Caco-2 (cell line): ENCODE measurements at regions of chrX and their contacts with region 1.

Region 1: DNA sequence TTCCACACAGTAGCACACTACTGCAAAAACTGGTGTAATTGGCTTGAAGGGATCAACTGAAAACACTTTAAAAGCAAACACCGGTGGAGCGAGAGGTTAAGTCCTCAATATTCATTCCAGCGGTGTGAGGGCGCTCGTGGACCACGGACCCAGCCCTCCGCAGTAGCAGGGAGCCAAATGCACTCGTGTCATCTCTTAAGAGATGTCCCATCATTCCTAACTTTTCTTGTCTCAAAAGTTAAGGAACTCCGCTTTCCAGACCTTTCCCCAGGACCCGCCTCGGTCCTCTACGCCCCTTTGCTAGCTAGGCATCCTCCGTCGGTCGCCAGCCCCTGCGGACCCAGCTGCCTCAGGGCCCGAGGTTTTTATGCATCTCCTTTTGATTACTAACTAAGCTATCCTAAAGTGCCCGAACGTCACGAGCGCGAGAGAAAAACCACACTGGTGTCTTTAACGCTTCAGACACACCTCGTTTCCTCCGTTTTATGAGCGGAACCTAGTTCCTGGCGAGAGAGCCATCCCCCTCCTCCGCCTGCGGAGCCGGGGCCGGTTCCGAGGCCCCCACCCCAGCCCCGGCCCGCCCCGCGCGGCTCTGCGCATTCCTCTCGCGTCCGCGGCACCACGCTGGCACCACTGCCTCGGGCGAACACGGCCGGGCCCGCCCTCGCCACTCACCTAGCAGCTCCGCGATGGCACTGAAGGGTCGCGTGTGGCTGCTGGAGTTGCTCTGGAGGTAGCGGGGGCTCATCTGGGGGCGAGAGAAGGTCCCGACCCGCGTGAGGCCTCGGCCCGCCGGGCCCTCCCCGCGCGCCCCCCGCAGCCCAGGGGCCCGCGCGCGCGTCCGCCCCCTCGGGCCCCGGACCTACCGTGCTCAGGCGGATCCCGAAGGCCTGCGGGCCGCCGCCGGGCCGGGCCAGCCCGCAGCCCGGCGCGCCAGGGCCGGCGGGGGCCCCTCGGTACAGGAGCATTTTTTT is 723 bp downstream of the MORC4 start:
- DNase-seq: peak; percentile 60 to 65
- H3K4me3 ChIP-seq: peak overlapping the region; percentile 51
- H3K4me3 Mint-ChIP-seq: peak overlapping the region; percentile 91
- H3K27ac Mint-ChIP-seq: no peak overlapping the region
- H3K4me1 ChIP-seq: peaks cover 12% of the 10 kb centered on the region; the same call in 1 of the 2 replicates
- H3K4me1 Mint-ChIP-seq: peaks cover 26% of the 10 kb centered on the region
- H3K27me3 ChIP-seq: no peaks in the 10 kb centered on the region
- H3K27me3 Mint-ChIP-seq: no peaks in the 10 kb centered on the region
- CTCF ChIP-seq: peak in 1 of 2 experiments; percentile 58

Region 2: GRCh38 chrX:106437405-106437804 is 561.9 kb before region 1 on chrX:
- CTCF ChIA-PET with region 1: no interaction called
- POLR2A ChIA-PET with region 1: no interaction called
- intact Hi-C with region 1: no loop called
- DNase-seq: no peak
- H3K4me3 ChIP-seq: no peak overlapping the region
- H3K4me3 Mint-ChIP-seq: no peak overlapping the region
- H3K27ac Mint-ChIP-seq: no peak overlapping the region
- H3K4me1 ChIP-seq: no peaks in the 10 kb centered on the region
- H3K4me1 Mint-ChIP-seq: no peaks in the 10 kb centered on the region
- H3K27me3 ChIP-seq: no peaks in the 10 kb centered on the region
- H3K27me3 Mint-ChIP-seq: peaks cover 8% of the 10 kb centered on the region
- CTCF ChIP-seq: no peak

Region 3: GRCh38 chrX:106698693-106699092 is 300.6 kb before region 1 on chrX:
- CTCF ChIA-PET with region 1: no interaction called
- POLR2A ChIA-PET with region 1: no interaction called
- intact Hi-C with region 1: no loop called
- DNase-seq: no peak
- H3K4me3 ChIP-seq: no peak overlapping the region
- H3K4me3 Mint-ChIP-seq: no peak overlapping the region
- H3K27ac Mint-ChIP-seq: no peak overlapping the region
- H3K4me1 ChIP-seq: no peaks in the 10 kb centered on the region
- H3K4me1 Mint-ChIP-seq: peaks cover 38% of the 10 kb centered on the region
- H3K27me3 ChIP-seq: no peaks in the 10 kb centered on the region
- H3K27me3 Mint-ChIP-seq: no peaks in the 10 kb centered on the region
- CTCF ChIP-seq: no peak

Region 4: GRCh38 chrX:107025545-107025944 is 26.3 kb after region 1 on chrX:
- CTCF ChIA-PET with region 1: interaction called, 4 read pairs
- POLR2A ChIA-PET with region 1: no interaction called
- intact Hi-C with region 1: loop called (anchors 1 kb)
- DNase-seq: peak in 1 of 2 experiments; percentile 25
- H3K4me3 ChIP-seq: no peak overlapping the region
- H3K4me3 Mint-ChIP-seq: no peak overlapping the region
- H3K27ac Mint-ChIP-seq: no peak overlapping the region
- H3K4me1 ChIP-seq: no peaks in the 10 kb centered on the region
- H3K4me1 Mint-ChIP-seq: no peaks in the 10 kb centered on the region
- H3K27me3 ChIP-seq: no peaks in the 10 kb centered on the region
- H3K27me3 Mint-ChIP-seq: peaks cover 3% of the 10 kb centered on the region
- CTCF ChIP-seq: peak; percentile 50 to 55

Region 5: GRCh38 chrX:107118322-107119147 is 119.2 kb after region 1 on chrX and contains the start of gene RBM41:
- CTCF ChIA-PET with region 1: no interaction called
- POLR2A ChIA-PET with region 1: no interaction called
- intact Hi-C with region 1: loop called (anchors 5 kb)
- DNase-seq: peak; percentile 76 to 80
- H3K4me3 ChIP-seq: peak within 1 kb of the TSS; percentile 64
- H3K4me3 Mint-ChIP-seq: peak within 1 kb of the TSS; percentile 99
- H3K27ac Mint-ChIP-seq: peak within 1 kb of the TSS; percentile 96
- H3K4me1 ChIP-seq: no peaks in the 10 kb centered on the region
- H3K4me1 Mint-ChIP-seq: peaks cover 11% of the 10 kb centered on the region
- H3K27me3 ChIP-seq: no peaks in the 10 kb centered on the region
- H3K27me3 Mint-ChIP-seq: no peaks in the 10 kb centered on the region
- CTCF ChIP-seq: no peak
- total RNA-seq, gene RBM41: 11.8 and 16.3 TPM in 2 replicates

Region 6: DNA sequence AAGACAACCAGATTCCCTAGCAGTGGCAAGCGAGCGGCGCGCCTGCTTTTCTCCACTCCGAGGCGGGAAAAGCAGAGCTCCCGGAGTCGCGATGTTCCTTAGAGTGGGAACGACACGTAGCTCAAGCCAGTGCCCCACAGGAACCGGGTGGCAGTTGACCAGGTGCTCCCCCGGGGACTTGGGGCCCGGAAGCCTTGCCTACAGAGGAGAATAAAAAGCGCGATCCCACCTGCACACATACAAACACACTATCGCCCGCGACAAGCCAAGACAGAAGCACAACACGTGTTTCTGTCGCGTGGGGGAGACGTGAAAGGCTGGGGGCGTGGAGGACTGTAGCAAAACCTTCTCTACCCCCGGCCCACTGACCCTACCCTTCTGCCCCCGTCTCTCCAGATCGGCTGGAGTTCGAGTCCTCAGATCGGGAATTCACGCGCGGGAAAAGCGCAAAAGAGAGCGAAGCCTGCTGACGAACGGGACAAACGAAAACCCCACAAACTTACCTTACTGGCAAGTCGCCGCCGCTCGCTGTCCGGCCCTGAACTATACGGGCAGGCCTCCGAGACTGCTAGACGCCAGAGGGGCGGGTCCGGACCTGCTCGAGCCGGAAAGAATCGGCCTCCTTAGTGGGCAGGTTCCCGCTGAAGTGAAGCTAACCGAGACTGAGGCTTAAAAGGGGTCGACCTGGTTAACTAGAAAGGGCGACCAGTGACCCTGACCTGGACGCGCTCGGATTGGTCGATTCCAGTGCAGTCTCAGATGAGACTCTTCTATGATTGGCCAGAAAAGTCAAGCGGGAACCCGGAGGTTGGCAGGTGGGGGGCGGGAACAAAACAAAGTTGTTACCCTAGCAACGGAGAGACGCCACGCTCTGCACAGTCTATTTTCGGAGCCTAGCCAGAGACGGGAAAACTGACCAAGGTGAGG is 206.7 kb after region 1 on chrX and contains the starts of genes DNAAF6 and NUP62CL:
- CTCF ChIA-PET with region 1: no interaction called
- POLR2A ChIA-PET with region 1: no interaction called
- intact Hi-C with region 1: loop called (anchors 10 kb)
- DNase-seq: peak; percentile 83 to 88
- H3K4me3 ChIP-seq: peak within 1 kb of the TSS; percentile 62
- H3K4me3 Mint-ChIP-seq: peak within 1 kb of the TSS; percentile 77
- H3K27ac Mint-ChIP-seq: peak within 1 kb of the TSS; percentile 59
- H3K4me1 ChIP-seq: no peaks in the 10 kb centered on the region
- H3K4me1 Mint-ChIP-seq: no peaks in the 10 kb centered on the region
- H3K27me3 ChIP-seq: no peaks in the 10 kb centered on the region
- H3K27me3 Mint-ChIP-seq: no peaks in the 10 kb centered on the region
- CTCF ChIP-seq: no peak
- total RNA-seq, gene DNAAF6: not detected in 2 replicates
- total RNA-seq, gene NUP62CL: 1.00 and 1.5 TPM in 2 replicates

Region 7: DNA sequence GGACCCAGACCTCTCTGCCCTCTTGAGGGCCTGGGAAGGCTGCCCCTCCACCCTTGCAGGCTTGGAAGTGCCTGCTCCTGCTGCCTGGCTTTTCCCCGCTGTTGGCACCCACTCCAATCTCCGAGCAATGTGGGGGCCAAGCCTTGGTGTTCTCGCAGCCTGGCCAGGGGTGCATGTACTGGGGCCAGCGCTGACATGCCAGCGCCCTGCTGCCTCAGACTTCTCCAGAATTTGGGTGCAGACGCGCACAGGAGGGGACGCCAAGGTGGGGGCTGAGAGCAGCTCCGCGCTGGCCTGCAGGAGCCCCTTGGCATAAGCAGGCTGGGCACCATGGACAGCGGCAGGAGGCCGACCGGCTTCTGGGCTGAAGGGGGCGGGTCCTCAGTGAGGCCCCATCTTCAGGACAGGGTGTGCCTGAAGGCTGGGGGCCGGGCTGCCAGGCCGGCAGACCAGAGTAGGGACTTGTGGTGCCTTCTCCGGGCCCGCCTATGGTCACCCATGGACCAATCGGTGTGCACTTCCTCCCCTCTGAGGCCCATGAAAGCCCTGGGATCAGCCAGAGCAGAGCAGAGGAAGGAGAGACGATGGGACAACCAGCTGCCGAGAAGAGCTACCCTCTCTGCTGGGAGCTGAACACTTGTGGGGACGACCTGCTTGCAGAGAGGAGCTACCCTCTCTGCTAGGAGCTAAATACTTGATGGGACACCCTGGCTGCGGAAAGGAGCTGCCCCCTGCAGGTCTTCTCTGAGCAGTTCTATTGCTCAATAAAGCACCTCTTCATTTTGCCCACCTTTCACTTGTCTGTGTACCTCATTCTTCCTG is 325.4 kb after region 1 on chrX:
- CTCF ChIA-PET with region 1: no interaction called
- POLR2A ChIA-PET with region 1: no interaction called
- intact Hi-C with region 1: loop called (anchors 1 kb)
- DNase-seq: peak; percentile 49 to 59
- H3K4me3 ChIP-seq: no peak overlapping the region
- H3K4me3 Mint-ChIP-seq: no peak overlapping the region
- H3K27ac Mint-ChIP-seq: no peak overlapping the region
- H3K4me1 ChIP-seq: no peaks in the 10 kb centered on the region
- H3K4me1 Mint-ChIP-seq: no peaks in the 10 kb centered on the region
- H3K27me3 ChIP-seq: no peaks in the 10 kb centered on the region
- H3K27me3 Mint-ChIP-seq: peaks cover 3% of the 10 kb centered on the region
- CTCF ChIP-seq: no peak